Activated CD8-positive, alpha-beta T cell treated with anti-CD3 and anti-CD28 coated beads, Interleukin-2, amount 10 ng/mL, durations not matched to agents 7 days and 5 days (primary cell): ENCODE measurements at regions of chr1 and their contacts with region 1.

Region 1: DNA sequence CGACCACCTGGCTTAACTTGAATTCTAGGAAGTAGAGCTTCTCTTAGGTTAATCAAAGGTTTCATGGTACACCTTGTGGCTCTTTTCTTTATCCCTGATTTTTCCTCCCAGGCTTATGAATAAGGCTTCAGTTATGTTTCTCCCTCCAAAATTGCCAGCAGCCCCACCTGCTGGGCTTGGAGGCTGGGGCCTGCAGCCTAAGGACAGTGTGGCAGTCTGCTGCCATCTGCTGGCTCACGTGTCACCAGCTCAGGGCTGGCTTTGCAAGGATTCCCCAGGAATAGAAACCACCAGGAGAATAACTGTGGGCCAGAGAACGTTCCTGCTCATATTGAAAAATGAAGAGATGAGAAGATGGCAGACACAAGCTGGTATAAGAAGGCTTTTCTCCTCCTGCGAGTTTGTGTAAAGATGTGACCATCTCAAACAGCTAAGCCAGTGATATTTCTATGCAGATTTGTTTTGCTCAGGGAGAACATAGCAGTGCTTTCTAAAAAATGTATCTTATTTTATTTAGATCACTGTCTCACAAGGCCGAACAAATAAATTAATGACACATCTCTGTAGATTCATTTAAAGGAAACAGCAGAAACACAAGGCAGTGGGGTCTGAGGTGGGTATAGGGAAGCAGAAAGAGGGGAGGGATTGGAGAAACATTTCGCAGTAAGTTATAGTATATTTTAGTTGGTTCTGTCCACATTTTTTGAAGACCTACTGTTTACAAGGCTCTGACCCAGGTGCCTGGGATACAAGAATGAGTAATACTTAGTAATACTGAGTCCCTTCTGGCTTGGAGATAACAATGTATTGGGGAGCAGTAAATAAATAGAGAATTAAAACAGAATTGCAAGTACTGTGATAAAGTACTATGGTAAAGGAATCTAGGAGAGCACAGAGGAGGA is 291.1 kb upstream of the SGIP1 start:
- DNase-seq: peak; percentile 83
- ATAC-seq: peak; percentile 95
- H3K4me3 Mint-ChIP-seq: no peak overlapping the region
- H3K27ac Mint-ChIP-seq: no peak overlapping the region
- H3K4me1 Mint-ChIP-seq: peaks cover 27% of the 10 kb centered on the region
- H3K27me3 Mint-ChIP-seq: peaks cover 6% of the 10 kb centered on the region

Region 2: DNA sequence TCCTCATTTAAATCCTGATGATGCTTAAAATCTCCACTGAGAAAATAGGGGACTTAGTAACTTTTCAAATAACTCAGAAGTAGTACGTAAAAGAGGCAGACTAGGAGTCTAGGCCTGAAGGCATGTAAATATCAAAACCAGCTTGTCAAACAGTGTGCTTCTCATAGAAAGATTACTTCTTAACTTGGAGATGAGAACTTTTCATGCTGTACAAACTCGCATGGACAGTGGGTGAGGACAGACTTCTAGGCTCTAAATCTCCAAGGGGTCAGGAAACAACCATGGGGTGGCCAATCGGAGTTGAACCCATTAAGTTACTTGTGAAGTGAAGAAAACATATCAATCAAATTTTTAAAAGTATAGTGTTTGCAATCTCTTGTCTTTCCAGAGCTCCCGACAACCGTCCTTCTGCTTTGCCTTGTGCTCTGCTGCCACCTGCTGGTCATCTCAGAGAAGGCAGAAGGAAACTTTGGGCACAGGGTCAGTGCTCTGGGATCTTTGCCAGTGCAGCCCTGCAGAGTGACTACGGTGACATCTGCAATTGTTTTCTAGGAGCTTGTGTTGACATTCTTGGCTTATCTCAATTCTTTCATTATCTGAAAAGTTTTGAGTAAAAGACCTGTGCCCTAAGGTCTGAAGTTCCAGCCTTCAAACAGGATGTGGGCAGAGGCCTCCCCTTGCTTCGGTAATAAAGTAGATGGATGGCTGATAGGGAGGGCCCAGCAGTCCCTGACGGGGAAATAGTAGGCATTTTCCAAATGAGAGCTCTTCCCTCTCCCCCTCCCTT is 555.3 kb before region 1 on chr1:
- CTCF ChIA-PET with region 1: interaction called, 11 read pairs
- POLR2A ChIA-PET with region 1: no interaction called
- DNase-seq: peak; percentile 79
- ATAC-seq: peak; percentile 92
- H3K4me3 Mint-ChIP-seq: no peak overlapping the region
- H3K27ac Mint-ChIP-seq: no peak overlapping the region
- H3K4me1 Mint-ChIP-seq: peaks cover 11% of the 10 kb centered on the region
- H3K27me3 Mint-ChIP-seq: peaks cover 12% of the 10 kb centered on the region

Region 3: GRCh38 chr1:65958561-65959350 is 284.1 kb before region 1 on chr1:
- CTCF ChIA-PET with region 1: interaction called, 175 read pairs
- POLR2A ChIA-PET with region 1: no interaction called
- DNase-seq: peak; percentile 47
- ATAC-seq: peak; percentile 57
- H3K4me3 Mint-ChIP-seq: no peak overlapping the region
- H3K27ac Mint-ChIP-seq: no peak overlapping the region
- H3K4me1 Mint-ChIP-seq: no peaks in the 10 kb centered on the region
- H3K27me3 Mint-ChIP-seq: peaks cover 4% of the 10 kb centered on the region

Region 4: GRCh38 chr1:66048011-66048410 is 194.9 kb before region 1 on chr1:
- CTCF ChIA-PET with region 1: interaction called, 10 read pairs
- POLR2A ChIA-PET with region 1: no interaction called
- DNase-seq: no peak
- ATAC-seq: no peak
- H3K4me3 Mint-ChIP-seq: no peak overlapping the region
- H3K27ac Mint-ChIP-seq: no peak overlapping the region
- H3K4me1 Mint-ChIP-seq: no peaks in the 10 kb centered on the region
- H3K27me3 Mint-ChIP-seq: peaks cover 8% of the 10 kb centered on the region

Region 5: GRCh38 chr1:66137235-66137634 is 105.7 kb before region 1 on chr1:
- CTCF ChIA-PET with region 1: no interaction called
- POLR2A ChIA-PET with region 1: no interaction called
- DNase-seq: no peak
- ATAC-seq: no peak
- H3K4me3 Mint-ChIP-seq: no peak overlapping the region
- H3K27ac Mint-ChIP-seq: no peak overlapping the region
- H3K4me1 Mint-ChIP-seq: no peaks in the 10 kb centered on the region
- H3K27me3 Mint-ChIP-seq: peaks cover 3% of the 10 kb centered on the region

Region 6: GRCh38 chr1:66223681-66224080 is 19.2 kb before region 1 on chr1:
- CTCF ChIA-PET with region 1: interaction called, 20 read pairs
- POLR2A ChIA-PET with region 1: no interaction called
- DNase-seq: no peak
- ATAC-seq: no peak
- H3K4me3 Mint-ChIP-seq: no peak overlapping the region
- H3K27ac Mint-ChIP-seq: no peak overlapping the region
- H3K4me1 Mint-ChIP-seq: no peaks in the 10 kb centered on the region
- H3K27me3 Mint-ChIP-seq: peaks cover 9% of the 10 kb centered on the region

Region 7: DNA sequence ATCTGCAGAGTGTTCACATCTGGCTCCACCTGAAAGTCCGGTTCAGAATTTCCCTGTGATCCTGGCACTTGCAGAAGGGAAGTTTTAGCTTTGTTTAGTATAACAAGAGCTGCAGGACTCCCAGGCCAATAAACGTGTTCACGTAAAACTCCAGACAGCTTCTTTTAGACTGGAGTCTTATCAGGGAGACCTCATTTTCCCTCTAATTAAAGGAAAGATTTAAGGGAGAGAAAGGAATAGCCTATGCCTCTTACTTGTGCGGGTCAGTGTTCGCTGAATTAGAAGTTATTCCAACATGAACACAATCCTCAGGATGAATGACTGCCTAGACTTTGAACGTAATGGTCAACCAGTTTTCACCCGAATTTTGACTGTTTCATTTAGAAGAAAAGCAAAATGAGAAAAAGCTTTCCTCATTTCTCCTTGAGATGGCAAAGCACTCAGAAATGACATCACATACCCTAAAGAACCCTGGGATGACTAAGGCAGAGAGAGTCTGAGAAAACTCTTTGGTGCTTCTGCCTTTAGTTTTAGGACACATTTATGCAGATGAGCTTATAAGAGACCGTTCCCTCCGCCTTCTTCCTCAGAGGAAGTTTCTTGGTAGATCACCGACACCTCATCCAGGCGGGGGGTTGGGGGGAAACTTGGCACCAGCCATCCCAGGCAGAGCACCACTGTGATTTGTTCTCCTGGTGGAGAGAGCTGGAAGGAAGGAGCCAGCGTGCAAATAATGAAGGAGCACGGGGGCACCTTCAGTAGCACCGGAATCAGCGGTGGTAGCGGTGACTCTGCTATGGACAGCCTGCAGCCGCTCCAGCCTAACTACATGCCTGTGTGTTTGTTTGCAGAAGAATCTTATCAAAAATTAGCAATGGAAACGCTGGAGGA is 89.0 kb after region 1 on chr1:
- CTCF ChIA-PET with region 1: interaction called, 13 read pairs
- POLR2A ChIA-PET with region 1: interaction called, 3 read pairs
- DNase-seq: peak; percentile 60
- ATAC-seq: peak; percentile 40
- H3K4me3 Mint-ChIP-seq: peak overlapping the region; percentile 97
- H3K27ac Mint-ChIP-seq: peak overlapping the region; percentile 91
- H3K4me1 Mint-ChIP-seq: peaks cover 57% of the 10 kb centered on the region
- H3K27me3 Mint-ChIP-seq: no peaks in the 10 kb centered on the region

Region 8: DNA sequence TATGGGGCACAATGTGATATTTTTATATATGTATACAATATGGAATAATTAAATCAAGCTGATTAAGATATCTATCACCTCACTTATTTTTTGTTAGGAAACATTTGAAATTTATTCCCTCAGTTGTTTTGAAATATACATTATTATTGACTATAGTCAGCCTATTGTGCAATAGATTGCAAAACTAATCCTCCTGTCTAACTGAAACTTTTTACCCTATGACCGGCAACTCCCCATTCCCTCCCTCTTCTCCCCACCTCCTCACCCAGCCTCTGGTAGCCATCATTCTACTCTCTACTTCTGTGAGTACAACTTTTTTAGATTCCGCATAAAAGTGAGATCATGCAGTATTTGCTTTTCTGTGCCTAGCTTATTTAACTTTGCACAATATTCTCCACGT is 173.4 kb after region 1 on chr1:
- CTCF ChIA-PET with region 1: no interaction called
- POLR2A ChIA-PET with region 1: no interaction called
- DNase-seq: no peak
- ATAC-seq: no peak
- H3K4me3 Mint-ChIP-seq: no peak overlapping the region
- H3K27ac Mint-ChIP-seq: no peak overlapping the region
- H3K4me1 Mint-ChIP-seq: peaks cover 21% of the 10 kb centered on the region
- H3K27me3 Mint-ChIP-seq: no peaks in the 10 kb centered on the region

Region 9: DNA sequence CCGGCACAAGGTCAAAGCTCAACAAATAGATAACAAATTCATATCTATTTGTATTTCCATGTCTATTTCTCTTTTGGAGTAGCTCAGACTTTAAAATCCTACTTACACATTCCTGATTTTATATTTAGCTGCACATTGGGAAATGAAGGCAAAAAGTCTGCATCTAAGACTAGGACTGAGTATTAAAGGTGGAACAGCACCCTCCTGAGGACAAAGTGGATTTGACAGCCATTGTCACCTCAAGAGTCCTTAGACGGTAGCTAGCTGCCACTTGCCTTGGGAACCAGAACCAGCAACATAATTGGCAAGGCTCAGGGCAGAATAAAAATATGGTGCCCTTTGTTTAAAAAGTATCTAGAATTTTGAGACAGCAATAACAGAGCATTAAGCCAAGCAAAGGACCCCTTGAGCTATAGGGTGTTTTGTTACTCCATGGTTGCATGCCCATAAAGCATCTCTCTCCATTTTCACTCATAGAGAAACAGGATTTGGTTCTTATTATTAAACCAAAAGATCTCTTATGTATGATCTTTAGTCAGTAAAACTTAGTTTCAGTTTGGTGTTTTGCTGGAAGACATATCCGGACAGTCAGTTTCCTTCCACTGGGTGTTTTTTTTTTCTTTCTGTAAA is 261.1 kb after region 1 on chr1:
- CTCF ChIA-PET with region 1: interaction called, 23 read pairs
- POLR2A ChIA-PET with region 1: no interaction called
- DNase-seq: peak; percentile 50
- ATAC-seq: peak; percentile 61
- H3K4me3 Mint-ChIP-seq: no peak overlapping the region
- H3K27ac Mint-ChIP-seq: no peak overlapping the region
- H3K4me1 Mint-ChIP-seq: peaks cover 7% of the 10 kb centered on the region
- H3K27me3 Mint-ChIP-seq: peaks cover 14% of the 10 kb centered on the region